ENCODE measurements at regions of chr18 and their contacts with region 1.

Region 1: DNA sequence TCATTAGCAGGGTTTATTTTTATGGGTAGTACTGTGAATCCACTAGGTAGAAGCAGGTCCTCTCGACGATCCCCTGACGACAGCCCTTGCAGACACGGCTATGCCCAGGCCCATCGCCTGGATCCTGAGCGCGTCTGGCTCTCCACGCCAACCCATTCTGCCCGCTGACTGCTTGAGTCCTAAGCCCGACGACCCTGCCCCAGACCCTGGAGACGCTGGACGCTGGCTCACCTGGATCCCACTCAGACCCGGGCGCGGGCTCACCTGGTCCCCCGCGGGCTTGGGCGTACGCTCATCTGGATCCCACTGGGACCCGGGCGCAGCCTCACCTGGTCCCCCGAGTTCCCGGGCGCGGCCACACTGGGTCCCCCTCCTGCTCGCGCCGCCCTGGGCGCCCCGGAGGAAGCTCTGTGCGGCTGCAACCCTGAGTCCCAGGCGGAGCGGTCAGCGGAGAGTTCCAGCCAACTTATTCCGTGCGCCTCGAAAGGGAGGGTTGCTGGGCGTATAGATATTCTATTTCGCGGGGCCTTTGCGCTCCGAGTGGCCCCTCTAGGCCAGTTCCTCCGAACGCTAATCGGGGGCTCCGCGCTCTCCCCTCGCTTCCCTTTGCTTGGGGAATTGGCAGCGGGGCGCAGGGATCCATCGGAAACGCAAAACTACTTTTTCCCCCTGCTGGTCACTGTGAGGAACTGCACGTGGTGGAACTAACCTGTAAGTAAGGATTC is 22.4 kb upstream of the RMP24 start:
- DNase-seq: peak; percentile 21 to 81 (median 36)
- ATAC-seq: peak; percentile 85
- H3K4me3 ChIP-seq: peak overlapping the region; percentile 59
- H3K4me3 Mint-ChIP-seq: peak overlapping the region; percentile 84
- H3K27ac ChIP-seq: no peak overlapping the region
- H3K27ac Mint-ChIP-seq: no peak overlapping the region
- H3K4me1 ChIP-seq: peaks cover 9% of the 10 kb centered on the region
- H3K4me1 Mint-ChIP-seq: peaks cover 6% of the 10 kb centered on the region
- H3K27me3 ChIP-seq: peaks cover 8 to 9% of the 10 kb centered on the region in 2 experiments
- H3K27me3 Mint-ChIP-seq: peaks cover 32% of the 10 kb centered on the region
- CTCF ChIP-seq: peak; percentile 95

Region 2: DNA sequence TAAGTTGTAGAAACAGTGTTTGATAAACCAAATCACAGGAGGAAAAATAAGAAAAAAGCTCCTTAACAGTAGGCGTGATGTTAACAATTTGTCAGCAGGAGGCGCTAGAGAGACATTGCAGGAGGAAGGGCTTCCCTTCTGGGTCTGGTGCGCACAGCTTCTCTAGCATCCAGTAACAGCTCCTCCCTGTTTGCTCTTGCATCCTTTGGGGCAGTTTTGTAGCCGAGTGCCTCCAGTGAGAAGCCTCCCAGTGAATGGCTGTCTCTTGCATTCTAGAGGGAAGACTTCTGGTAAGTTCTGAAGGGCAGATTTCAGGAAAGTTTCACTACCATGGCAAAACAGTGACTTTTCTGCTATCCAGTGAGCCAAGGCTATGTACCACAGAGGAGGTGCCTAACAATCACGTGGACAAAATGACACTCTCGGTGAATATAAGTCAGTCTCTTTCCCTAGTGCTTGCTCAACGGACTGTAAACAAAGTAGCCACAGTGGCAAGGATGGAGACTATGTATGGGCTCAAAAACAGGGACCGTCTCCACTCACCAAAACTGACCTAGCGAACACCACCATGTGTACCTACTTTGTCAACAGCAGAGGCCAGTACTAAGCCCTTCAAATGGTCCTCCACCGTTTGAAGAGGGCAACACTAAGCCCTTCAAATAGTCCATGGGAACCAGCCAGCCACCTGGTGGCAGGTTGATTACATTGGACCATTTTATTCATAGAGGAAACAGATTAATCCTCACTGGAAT is 563.3 kb before region 1 on chr18:
- CTCF ChIA-PET with region 1: no interaction called
- POLR2A ChIA-PET with region 1: no interaction called
- intact Hi-C with region 1: loop called in 1 of 2 experiments (anchors 5 kb)
- DNase-seq: peak; percentile 29 to 89 (median 52)
- ATAC-seq: peak; percentile 99
- H3K4me3 ChIP-seq: no peak overlapping the region
- H3K4me3 Mint-ChIP-seq: no peak overlapping the region
- H3K27ac ChIP-seq: no peak overlapping the region
- H3K27ac Mint-ChIP-seq: no peak overlapping the region
- H3K4me1 ChIP-seq: peaks cover 5% of the 10 kb centered on the region
- H3K4me1 Mint-ChIP-seq: peaks cover 7% of the 10 kb centered on the region
- H3K27me3 ChIP-seq: peaks cover 0 to 4% of the 10 kb centered on the region in 2 experiments
- H3K27me3 Mint-ChIP-seq: peaks cover 23% of the 10 kb centered on the region
- CTCF ChIP-seq: peak; percentile 95

Region 3: GRCh38 chr18:35407871-35408481 is 542.1 kb before region 1 on chr18:
- CTCF ChIA-PET with region 1: no interaction called
- POLR2A ChIA-PET with region 1: no interaction called
- intact Hi-C with region 1: loop called (anchors 1 to 2 kb)
- DNase-seq: peak in 8 of 14 experiments; percentile 5 to 78 (median 44)
- ATAC-seq: peak; percentile 75
- H3K4me3 ChIP-seq: no peak overlapping the region
- H3K4me3 Mint-ChIP-seq: no peak overlapping the region
- H3K27ac ChIP-seq: no peak overlapping the region
- H3K27ac Mint-ChIP-seq: no peak overlapping the region
- H3K4me1 ChIP-seq: peaks cover 6% of the 10 kb centered on the region
- H3K4me1 Mint-ChIP-seq: peaks cover 24% of the 10 kb centered on the region
- H3K27me3 ChIP-seq: no peaks in the 10 kb centered on the region
- H3K27me3 Mint-ChIP-seq: peaks cover 10% of the 10 kb centered on the region
- CTCF ChIP-seq: peak; percentile 94

Region 4: GRCh38 chr18:35592298-35592697 is 357.8 kb before region 1 on chr18:
- CTCF ChIA-PET with region 1: no interaction called
- POLR2A ChIA-PET with region 1: no interaction called
- intact Hi-C with region 1: loop called (anchors 1 to 2 kb)
- DNase-seq: no peak
- ATAC-seq: no peak
- H3K4me3 ChIP-seq: no peak overlapping the region
- H3K4me3 Mint-ChIP-seq: no peak overlapping the region
- H3K27ac ChIP-seq: no peak overlapping the region
- H3K27ac Mint-ChIP-seq: no peak overlapping the region
- H3K4me1 ChIP-seq: no peaks in the 10 kb centered on the region
- H3K4me1 Mint-ChIP-seq: peaks cover 32% of the 10 kb centered on the region
- H3K27me3 ChIP-seq: no peaks in the 10 kb centered on the region
- H3K27me3 Mint-ChIP-seq: no peaks in the 10 kb centered on the region
- CTCF ChIP-seq: no peak

Region 5: GRCh38 chr18:35756506-35757117 is 193.5 kb before region 1 on chr18:
- CTCF ChIA-PET with region 1: no interaction called
- POLR2A ChIA-PET with region 1: no interaction called
- intact Hi-C with region 1: loop called in 1 of 2 experiments (anchors 2 kb)
- DNase-seq: peak in 12 of 14 experiments; percentile 8 to 71 (median 36)
- ATAC-seq: peak; percentile 57
- H3K4me3 ChIP-seq: no peak overlapping the region
- H3K4me3 Mint-ChIP-seq: no peak overlapping the region
- H3K27ac ChIP-seq: no peak overlapping the region
- H3K27ac Mint-ChIP-seq: no peak overlapping the region
- H3K4me1 ChIP-seq: no peaks in the 10 kb centered on the region
- H3K4me1 Mint-ChIP-seq: no peaks in the 10 kb centered on the region
- H3K27me3 ChIP-seq: peaks cover 0 to 4% of the 10 kb centered on the region in 2 experiments
- H3K27me3 Mint-ChIP-seq: peaks cover 33% of the 10 kb centered on the region
- CTCF ChIP-seq: peak; percentile 96